K562 (cell line): ENCODE measurements at regions of chr1 and their contacts with region 1.

Region 1: GRCh38 chr1:116724765-116725375 is 29.4 kb upstream of the CD2 start:
- DNase-seq: peak; percentile 64 to 88 (median 71)
- ATAC-seq: peak; percentile 78
- H3K4me3 ChIP-seq: no peak overlapping the region
- H3K27ac ChIP-seq: no peak overlapping the region
- H3K4me1 ChIP-seq: peaks cover 0 to 6% of the 10 kb centered on the region in 2 experiments; a peak in 2 of 5 replicates
- H3K27me3 ChIP-seq: no peaks in the 10 kb centered on the region
- CTCF ChIP-seq: peak; percentile 65 to 88 (median 84); a peak in 5 of 6 replicates
- EP300 ChIP-seq: no peak
- POLR2A ChIP-seq: no peak
- RAD21 ChIP-seq: peak; percentile 64 to 76

Region 2: DNA sequence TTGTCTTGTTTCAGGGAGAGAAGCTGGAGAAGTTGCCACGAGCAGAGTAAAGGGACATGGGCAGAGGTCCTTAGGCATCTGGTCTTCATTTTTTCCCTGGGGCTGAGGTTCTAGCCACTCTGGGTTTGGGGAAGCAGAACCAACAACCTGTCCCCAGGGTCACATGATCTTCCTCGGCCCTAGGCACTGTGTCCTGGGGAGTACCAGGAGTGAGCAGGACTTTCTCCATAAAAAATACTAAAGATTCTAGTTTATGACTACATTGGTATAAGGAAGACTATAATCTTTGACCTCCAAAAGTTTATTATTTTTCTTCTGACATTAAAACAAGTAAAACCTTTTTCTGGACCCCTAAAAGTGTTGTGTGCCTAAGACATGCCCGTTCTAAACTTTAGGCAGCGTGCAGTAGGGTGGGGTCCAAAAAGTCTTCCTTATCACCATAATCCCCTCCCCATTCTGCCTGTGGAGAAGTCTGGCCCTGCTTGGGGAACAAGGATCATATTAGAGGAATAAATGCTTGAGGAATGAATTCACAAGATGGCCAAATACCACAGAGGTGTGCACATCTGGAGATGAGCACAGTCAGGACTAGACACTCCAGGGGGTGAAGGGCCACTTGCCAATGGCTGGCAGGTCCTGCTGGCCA is 38.0 kb before region 1 on chr1:
- CTCF ChIA-PET with region 1: no interaction called
- POLR2A ChIA-PET with region 1: interaction called, 3 read pairs
- in situ Hi-C with region 1: no loop called
- intact Hi-C with region 1: loop called (anchors 5 kb)
- DNase-seq: peak in 1 of 4 experiments; percentile 44
- ATAC-seq: peak; percentile 1; the same call in 2 of the 3 replicates
- H3K4me3 ChIP-seq: no peak overlapping the region
- H3K27ac ChIP-seq: peak overlapping the region; percentile 91
- H3K4me1 ChIP-seq: peaks cover 39 to 74% of the 10 kb centered on the region in 2 experiments
- H3K27me3 ChIP-seq: no peaks in the 10 kb centered on the region
- CTCF ChIP-seq: no peak
- EP300 ChIP-seq: no peak
- POLR2A ChIP-seq: no peak
- RAD21 ChIP-seq: no peak